PC-3 (cell line): ENCODE measurements at regions of chr6 and their contacts with region 1.

Region 1: GRCh38 chr6:25962149-25963127 is at the start of gene TRIM38:
- DNase-seq: peak; percentile 88
- ATAC-seq: peak; percentile 90
- H3K4me3 ChIP-seq: peak within 1 kb of the TSS; percentile 78
- H3K27ac ChIP-seq: peak within 1 kb of the TSS; percentile 81
- H3K4me1 ChIP-seq: peaks cover 25% of the 10 kb centered on the region
- H3K27me3 ChIP-seq: no peaks in the 10 kb centered on the region
- CTCF ChIP-seq: no peak
- total RNA-seq, gene TRIM38: 5.6 and 6.4 TPM in 2 replicates

Region 2: DNA sequence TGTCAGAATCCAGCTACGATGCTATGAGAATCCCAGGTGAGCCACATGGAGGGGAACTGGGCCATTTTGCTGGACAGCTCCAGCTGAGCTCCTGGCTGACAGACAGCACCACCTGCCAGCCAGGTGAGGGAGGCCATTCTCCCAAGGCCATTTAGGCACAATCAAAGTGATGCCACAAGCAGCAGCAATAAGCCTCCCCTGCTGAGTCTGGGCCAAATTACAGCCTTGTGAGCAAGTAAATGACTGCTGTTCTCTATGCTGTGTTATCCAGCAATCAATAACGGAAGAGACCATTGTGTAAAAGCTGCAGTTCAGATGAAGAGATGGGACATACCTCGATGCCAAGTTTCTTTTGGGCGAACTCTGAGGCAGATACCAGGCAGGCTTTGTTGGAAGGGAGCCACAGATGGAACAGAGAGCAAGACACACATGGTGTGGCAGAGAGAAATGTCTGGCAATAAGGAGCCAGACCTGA is 324.4 kb before region 1 on chr6:
- CTCF ChIA-PET with region 1: no interaction called
- POLR2A ChIA-PET with region 1: no interaction called
- intact Hi-C with region 1: no loop called
- DNase-seq: peak; percentile 43
- ATAC-seq: no peak
- H3K4me3 ChIP-seq: no peak overlapping the region
- H3K27ac ChIP-seq: no peak overlapping the region
- H3K4me1 ChIP-seq: no peaks in the 10 kb centered on the region
- H3K27me3 ChIP-seq: peaks cover 55% of the 10 kb centered on the region
- CTCF ChIP-seq: peak; percentile 34; the same call in 1 of the 2 replicates

Region 3: DNA sequence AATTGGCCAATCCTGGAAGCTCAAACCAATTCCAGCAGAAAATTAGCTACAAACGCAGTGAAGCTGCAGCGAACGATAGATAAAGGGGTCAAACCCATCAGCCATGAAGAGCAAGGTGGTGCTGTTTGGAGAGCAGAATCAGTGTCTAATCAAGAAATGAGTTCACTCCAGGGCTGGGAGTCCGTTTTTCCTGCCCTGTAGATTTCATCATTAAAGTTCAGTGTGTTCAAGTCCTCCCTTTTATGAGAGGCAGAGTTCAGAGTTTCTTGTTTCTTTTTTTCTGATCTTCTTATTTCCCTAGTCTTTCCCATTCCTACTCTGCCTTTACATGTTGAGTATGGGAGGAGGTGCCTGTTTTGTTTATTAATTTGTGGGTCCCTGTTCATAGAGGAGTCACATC is 161.0 kb before region 1 on chr6:
- CTCF ChIA-PET with region 1: no interaction called
- POLR2A ChIA-PET with region 1: no interaction called
- intact Hi-C with region 1: no loop called
- DNase-seq: no peak
- ATAC-seq: no peak
- H3K4me3 ChIP-seq: no peak overlapping the region
- H3K27ac ChIP-seq: no peak overlapping the region
- H3K4me1 ChIP-seq: no peaks in the 10 kb centered on the region
- H3K27me3 ChIP-seq: peaks cover 47% of the 10 kb centered on the region
- CTCF ChIP-seq: no peak

Region 4: GRCh38 chr6:25992413-25993037 is 30.1 kb after region 1 on chr6:
- CTCF ChIA-PET with region 1: no interaction called
- POLR2A ChIA-PET with region 1: no interaction called
- intact Hi-C with region 1: loop called (anchors 2 kb)
- DNase-seq: peak; percentile 95
- ATAC-seq: peak; percentile 92
- H3K4me3 ChIP-seq: peak overlapping the region; percentile 96
- H3K27ac ChIP-seq: peak overlapping the region; percentile 51
- H3K4me1 ChIP-seq: peaks cover 6% of the 10 kb centered on the region; the same call in 1 of the 2 replicates
- H3K27me3 ChIP-seq: no peaks in the 10 kb centered on the region
- CTCF ChIP-seq: peak; percentile 98

Region 5: DNA sequence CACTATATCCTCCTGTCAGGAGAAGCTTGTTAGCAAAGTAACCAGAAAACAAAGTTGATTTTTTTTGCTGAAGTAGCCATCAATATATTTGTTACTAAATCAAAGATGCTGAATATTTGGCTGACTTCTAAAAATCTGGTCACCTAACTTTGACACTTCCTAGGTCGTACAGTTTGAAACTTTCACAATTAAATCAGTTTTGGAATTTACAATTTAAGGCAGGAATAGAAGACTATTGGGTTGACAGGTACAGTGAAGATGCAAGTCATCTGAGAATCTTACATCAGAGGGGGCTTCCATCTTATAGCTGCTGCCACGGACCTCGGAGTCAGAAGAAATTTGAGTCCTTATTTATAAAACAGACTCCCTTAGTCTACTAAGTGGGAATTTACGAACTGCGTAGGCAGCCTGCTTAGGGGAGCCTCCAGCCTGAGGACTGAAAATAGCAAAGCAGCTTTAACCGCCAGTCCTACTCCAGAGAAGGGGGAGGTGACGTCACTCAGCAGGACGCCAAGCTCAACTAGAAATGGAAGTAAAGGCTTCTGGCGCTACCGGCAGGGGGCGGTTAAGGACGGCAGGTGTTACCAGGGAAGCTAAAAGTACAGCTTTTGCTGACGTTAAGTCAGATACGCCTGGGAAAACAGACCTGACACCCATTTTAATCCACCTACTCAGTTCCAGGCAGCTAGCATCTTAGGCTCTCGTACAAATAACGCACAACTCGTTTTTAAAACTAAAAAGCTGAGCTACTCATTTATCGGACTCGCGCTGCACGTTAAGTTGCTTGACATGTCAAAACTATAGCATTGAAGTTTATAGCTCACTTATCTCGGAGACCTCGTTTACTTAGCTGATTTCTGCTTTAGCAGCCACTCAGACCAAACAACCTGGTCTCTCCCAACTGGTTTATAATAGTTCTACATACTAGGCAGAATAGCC is 63.7 kb after region 1 on chr6:
- CTCF ChIA-PET with region 1: no interaction called
- POLR2A ChIA-PET with region 1: no interaction called
- intact Hi-C with region 1: loop called (anchors 5 kb)
- DNase-seq: peak; percentile 96
- ATAC-seq: peak; percentile 37
- H3K4me3 ChIP-seq: peak overlapping the region; percentile 73
- H3K27ac ChIP-seq: peak overlapping the region; percentile 56
- H3K4me1 ChIP-seq: peaks cover 60% of the 10 kb centered on the region
- H3K27me3 ChIP-seq: no peaks in the 10 kb centered on the region
- CTCF ChIP-seq: peak; percentile 85